MCF 10A (cell line): ENCODE measurements at regions of chr19 and their contacts with region 1.

Region 1: GRCh38 chr19:19663256-19664038 is at the start of gene ATP13A1:
- DNase-seq: peak; percentile 98
- H3K4me3 Mint-ChIP-seq: peak within 1 kb of the TSS; percentile 79
- H3K27ac Mint-ChIP-seq: peak within 1 kb of the TSS; percentile 96
- H3K4me1 Mint-ChIP-seq: peaks cover 16% of the 10 kb centered on the region
- H3K27me3 Mint-ChIP-seq: no peaks in the 10 kb centered on the region
- CTCF ChIP-seq: no peak
- total RNA-seq, gene ATP13A1: 63.9 and 67.2 TPM in 2 replicates

Region 2: GRCh38 chr19:19635313-19635702 is 28.1 kb before region 1 on chr19:
- CTCF ChIA-PET with region 1: no interaction called
- POLR2A ChIA-PET with region 1: no interaction called
- intact Hi-C with region 1: no loop called
- DNase-seq: no peak
- H3K4me3 Mint-ChIP-seq: no peak overlapping the region
- H3K27ac Mint-ChIP-seq: no peak overlapping the region
- H3K4me1 Mint-ChIP-seq: no peaks in the 10 kb centered on the region
- H3K27me3 Mint-ChIP-seq: no peaks in the 10 kb centered on the region
- CTCF ChIP-seq: no peak

Region 3: DNA sequence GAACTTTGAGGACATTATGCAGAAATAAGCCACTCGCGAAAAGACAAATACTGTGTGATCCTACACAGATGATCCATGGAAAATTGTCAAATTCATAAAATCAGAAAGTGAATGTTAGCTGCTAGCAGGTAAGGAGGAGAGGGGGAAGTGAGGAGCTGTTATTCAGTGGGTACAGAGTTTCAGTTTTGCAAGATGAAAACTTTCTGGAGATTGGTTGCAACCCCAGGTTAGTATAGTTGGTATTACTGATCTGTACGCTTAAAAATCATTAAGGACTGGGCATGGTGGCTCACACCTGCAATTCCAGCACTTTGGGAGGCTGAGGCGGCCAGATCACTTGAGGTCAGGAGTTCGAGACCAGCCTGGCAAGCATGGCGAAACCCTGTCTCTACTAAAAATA is 23.1 kb after region 1 on chr19:
- CTCF ChIA-PET with region 1: no interaction called
- POLR2A ChIA-PET with region 1: no interaction called
- intact Hi-C with region 1: no loop called
- DNase-seq: no peak
- H3K4me3 Mint-ChIP-seq: no peak overlapping the region
- H3K27ac Mint-ChIP-seq: no peak overlapping the region
- H3K4me1 Mint-ChIP-seq: no peaks in the 10 kb centered on the region
- H3K27me3 Mint-ChIP-seq: no peaks in the 10 kb centered on the region
- CTCF ChIP-seq: no peak

Region 4: DNA sequence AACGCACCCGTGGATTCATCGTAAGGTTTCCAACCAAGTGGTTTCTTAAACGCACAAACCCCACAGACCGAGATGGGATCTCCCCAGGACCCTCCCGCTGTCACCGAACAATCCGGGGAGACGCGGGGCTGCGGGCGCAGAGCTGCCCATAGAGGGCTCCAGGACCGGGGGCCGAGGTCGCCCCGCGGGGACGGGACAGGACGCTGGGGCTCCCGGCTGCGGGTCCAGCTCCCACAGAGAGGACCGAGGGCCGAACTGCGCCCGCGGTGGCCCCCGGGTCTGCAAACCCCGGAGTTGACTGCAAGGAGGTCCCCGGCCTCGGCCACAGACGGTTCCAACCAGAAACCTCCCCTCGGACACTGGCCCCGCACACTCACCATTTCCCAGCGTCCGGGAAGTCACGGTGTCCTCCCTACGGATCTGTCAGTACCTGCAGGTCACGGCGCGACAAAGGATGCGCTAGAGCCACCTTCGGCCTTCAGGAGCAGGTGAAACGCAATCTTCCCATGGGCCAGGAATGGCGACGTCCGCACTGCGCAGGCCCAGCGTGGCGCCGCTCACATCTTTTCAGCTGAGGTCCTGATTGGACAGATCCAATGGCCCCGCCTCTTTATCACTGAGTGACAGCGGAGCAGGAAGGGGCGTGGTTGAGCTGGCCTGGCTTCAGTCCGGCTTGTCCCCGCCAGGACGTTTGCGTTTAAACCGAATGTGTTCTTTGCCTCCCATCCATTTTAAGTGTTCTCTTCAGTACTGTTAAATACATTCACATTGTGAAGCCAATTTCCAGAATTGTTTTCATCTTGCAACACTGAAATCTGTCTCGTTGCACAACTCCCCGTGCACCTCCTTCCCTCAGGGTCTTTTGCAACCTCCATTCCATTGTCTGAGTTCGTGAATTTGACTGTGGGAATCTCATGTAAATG is 69.4 kb after region 1 on chr19 and contains the start of gene ZNF14:
- CTCF ChIA-PET with region 1: no interaction called
- POLR2A ChIA-PET with region 1: interaction called, 12 read pairs
- intact Hi-C with region 1: no loop called
- DNase-seq: peak; percentile 96
- H3K4me3 Mint-ChIP-seq: peak within 1 kb of the TSS; percentile 98
- H3K27ac Mint-ChIP-seq: peak within 1 kb of the TSS; percentile 91
- H3K4me1 Mint-ChIP-seq: no peaks in the 10 kb centered on the region
- H3K27me3 Mint-ChIP-seq: no peaks in the 10 kb centered on the region
- CTCF ChIP-seq: no peak
- total RNA-seq, gene ZNF14: 3.5 and 3.9 TPM in 2 replicates

Region 5: GRCh38 chr19:19865739-19866481 is 202.5 kb after region 1 on chr19 and contains the start of gene ZNF253:
- CTCF ChIA-PET with region 1: no interaction called
- POLR2A ChIA-PET with region 1: no interaction called
- intact Hi-C with region 1: loop called (anchors 10 kb)
- DNase-seq: peak; percentile 92
- H3K4me3 Mint-ChIP-seq: peak within 1 kb of the TSS; percentile 89
- H3K27ac Mint-ChIP-seq: peak within 1 kb of the TSS; percentile 96
- H3K4me1 Mint-ChIP-seq: no peaks in the 10 kb centered on the region
- H3K27me3 Mint-ChIP-seq: no peaks in the 10 kb centered on the region
- CTCF ChIP-seq: no peak
- total RNA-seq, gene ZNF253: 1.4 and 1.8 TPM in 2 replicates